Activated T-helper 1 cell treated with anti-CD3 and anti-CD28 coated beads, Interleukin-12 subunit alpha, Interleukin-12 subunit beta, Interleukin-2, Interleukin-4 antibody, amounts not matched to agents 30 ng/mL and 10 ng/mL and 1 ng/mL, durations not matched to agents 14 hours and 24 hours and 36 hours (primary cell): ENCODE measurements at regions of chr9 and their contacts with region 1.

Region 1: DNA sequence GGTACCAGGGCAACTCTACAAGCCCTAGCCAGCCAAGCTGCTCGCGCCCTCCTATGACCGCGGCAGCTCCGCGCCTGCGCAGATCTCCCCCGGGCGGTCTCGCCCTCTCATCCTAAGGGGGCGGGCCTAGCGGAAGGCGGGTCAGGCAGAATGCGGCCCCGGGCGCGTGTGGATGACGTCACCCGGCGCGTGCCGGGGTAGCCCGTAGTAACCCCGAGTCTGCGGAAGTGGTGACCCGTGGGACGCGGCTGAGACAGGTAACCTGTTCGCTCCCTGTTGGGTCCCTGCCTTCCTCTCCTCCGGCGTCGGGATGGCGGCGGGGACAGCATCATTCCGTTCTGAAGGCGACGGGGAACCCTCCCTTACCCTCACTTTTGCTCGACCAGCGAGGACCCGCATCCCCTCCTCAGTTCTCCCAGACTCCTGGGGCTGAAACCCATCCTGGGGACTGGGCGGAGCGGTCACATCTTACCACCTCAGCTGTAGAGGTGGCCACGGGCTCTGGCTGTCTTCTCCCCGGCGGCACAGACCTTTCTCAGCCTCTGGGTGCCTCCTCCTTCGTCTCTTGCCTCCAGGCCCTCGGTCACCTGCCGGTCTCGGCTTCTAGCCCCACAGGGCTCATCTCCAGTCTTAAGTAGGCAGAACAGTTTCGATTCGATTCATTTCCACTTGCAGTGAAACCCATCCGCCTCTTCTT is at the start of gene AOPEP:
- DNase-seq: peak; percentile 99
- H3K4me3 Mint-ChIP-seq: peak within 1 kb of the TSS; percentile 94
- H3K27ac Mint-ChIP-seq: peak within 1 kb of the TSS; percentile 99
- H3K4me1 Mint-ChIP-seq: peaks cover 12% of the 10 kb centered on the region
- H3K27me3 Mint-ChIP-seq: peaks cover 2% of the 10 kb centered on the region
- total RNA-seq, gene AOPEP: 20.5 and 22.5 TPM in 2 replicates

Region 2: GRCh38 chr9:94166237-94166963 is 560.2 kb before region 1 on chr9:
- intact Hi-C with region 1: loop called (anchors 1 kb)
- DNase-seq: peak; percentile 92
- H3K4me3 Mint-ChIP-seq: peak overlapping the region; percentile 95
- H3K27ac Mint-ChIP-seq: peak overlapping the region; percentile 89
- H3K4me1 Mint-ChIP-seq: peaks cover 46% of the 10 kb centered on the region
- H3K27me3 Mint-ChIP-seq: peaks cover 2% of the 10 kb centered on the region

Region 3: DNA sequence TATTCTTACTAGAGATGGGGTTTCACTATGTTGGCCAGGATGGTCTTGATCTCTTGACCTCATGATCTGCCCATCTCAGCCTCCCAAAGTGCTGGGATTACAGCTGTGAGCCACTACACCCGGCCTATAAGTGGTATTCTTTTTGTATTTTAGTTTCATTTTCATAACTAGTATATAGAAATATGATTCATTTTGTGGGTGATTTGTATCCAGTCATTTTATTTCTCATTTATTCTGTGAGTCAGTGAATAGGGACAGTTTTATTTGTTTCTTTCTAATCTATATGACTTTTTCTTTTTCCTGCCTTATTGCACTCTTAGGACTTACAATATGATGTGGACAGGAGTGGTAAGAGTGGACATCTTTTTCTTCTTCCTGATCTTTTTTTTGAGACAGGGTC is 112.8 kb after region 1 on chr9:
- intact Hi-C with region 1: loop called (anchors 1 kb)
- DNase-seq: no peak
- H3K4me3 Mint-ChIP-seq: no peak overlapping the region
- H3K27ac Mint-ChIP-seq: peak overlapping the region; percentile 24
- H3K4me1 Mint-ChIP-seq: peaks cover 28% of the 10 kb centered on the region
- H3K27me3 Mint-ChIP-seq: peaks cover 2% of the 10 kb centered on the region

Region 4: DNA sequence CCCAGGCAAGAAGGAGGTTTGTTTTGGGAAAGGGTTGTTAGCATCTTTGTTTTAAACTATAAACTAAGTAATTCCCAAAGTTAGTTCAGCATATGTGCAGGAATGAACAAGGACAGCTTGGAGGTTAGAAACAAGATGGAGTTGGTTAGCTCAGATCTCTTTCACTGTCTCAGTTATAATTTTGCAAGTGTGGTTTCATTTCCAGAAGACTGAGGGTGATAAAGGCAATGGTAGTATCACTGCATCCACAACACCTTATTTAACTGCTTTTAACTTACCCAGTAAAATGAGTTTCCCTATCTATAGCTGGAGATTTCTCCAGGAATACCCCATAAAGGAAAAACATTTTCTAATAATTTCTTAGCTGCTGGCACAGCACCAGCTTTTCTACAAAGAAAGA is 152.6 kb after region 1 on chr9:
- intact Hi-C with region 1: loop called (anchors 2 kb)
- DNase-seq: no peak
- H3K4me3 Mint-ChIP-seq: peak overlapping the region; percentile 55
- H3K27ac Mint-ChIP-seq: peak overlapping the region; percentile 35
- H3K4me1 Mint-ChIP-seq: peaks cover 41% of the 10 kb centered on the region
- H3K27me3 Mint-ChIP-seq: no peaks in the 10 kb centered on the region

Region 5: GRCh38 chr9:95127249-95128176 is 400.9 kb after region 1 on chr9:
- intact Hi-C with region 1: loop called (anchors 1 kb)
- DNase-seq: peak; percentile 56
- H3K4me3 Mint-ChIP-seq: no peak overlapping the region
- H3K27ac Mint-ChIP-seq: no peak overlapping the region
- H3K4me1 Mint-ChIP-seq: peaks cover 7% of the 10 kb centered on the region
- H3K27me3 Mint-ChIP-seq: no peaks in the 10 kb centered on the region

Region 6: GRCh38 chr9:95317119-95317892 is 590.7 kb after region 1 on chr9 and contains the start of gene FANCC:
- intact Hi-C with region 1: loop called (anchors 1 kb)
- DNase-seq: peak; percentile 84
- H3K4me3 Mint-ChIP-seq: peak within 1 kb of the TSS; percentile 91
- H3K27ac Mint-ChIP-seq: peak within 1 kb of the TSS; percentile 95
- H3K4me1 Mint-ChIP-seq: peaks cover 25% of the 10 kb centered on the region
- H3K27me3 Mint-ChIP-seq: peaks cover 12% of the 10 kb centered on the region
- total RNA-seq, gene FANCC: 18.7 and 23.7 TPM in 2 replicates

Region 7: DNA sequence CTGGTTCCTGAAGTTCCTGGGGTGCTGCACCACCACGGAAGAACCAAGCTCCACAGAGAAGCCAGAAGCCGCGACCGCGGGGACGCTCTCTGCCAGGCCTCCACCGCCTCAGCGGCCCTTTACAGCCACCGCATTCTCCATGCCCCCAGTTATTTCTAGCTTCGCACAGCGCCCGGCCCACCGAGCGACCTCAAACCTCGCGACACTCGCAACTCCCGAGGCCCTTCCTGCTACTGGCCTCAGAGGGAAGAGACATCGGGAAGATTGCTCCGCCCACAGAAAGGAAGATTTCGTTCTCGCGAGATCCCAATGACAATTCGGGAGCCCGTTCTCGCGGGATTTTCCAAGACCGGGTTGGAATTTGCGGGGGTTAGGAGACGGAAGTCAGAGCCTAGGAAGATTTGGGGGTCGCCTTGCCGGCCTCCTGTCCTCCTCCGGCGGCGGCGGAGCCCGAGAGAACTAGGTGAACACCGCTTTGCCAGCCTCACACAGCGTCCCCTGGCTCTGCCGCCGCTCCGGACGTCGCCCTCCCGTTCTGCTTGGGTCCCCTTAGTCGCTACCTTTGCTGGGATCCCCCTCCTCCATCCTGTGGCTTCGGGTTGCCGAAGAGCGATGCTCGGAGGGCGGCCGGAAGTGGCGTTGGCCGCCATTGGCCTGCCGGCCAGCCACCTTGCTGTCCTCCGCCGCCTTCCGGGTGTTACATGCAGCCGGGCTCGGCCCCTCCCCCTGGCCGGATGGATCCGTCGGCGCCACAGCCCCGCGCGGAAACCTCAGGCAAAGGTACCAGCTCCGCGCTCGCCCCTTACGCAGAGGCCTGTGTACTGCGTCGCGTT is 1148.9 kb after region 1 on chr9 and contains the start of gene ERCC6L2:
- intact Hi-C with region 1: loop called (anchors 2 kb)
- DNase-seq: peak; percentile 92
- H3K4me3 Mint-ChIP-seq: no peak within 1 kb of the TSS
- H3K27ac Mint-ChIP-seq: no peak within 1 kb of the TSS
- H3K4me1 Mint-ChIP-seq: peaks cover 33% of the 10 kb centered on the region
- H3K27me3 Mint-ChIP-seq: no peaks in the 10 kb centered on the region
- total RNA-seq, gene ERCC6L2: 31.2 and 33.7 TPM in 2 replicates